ENCODE measurements at regions of chr2 and their contacts with region 1.

Region 1: GRCh38 chr2:9423100-9423921 is at the starts of genes CPSF3 and ITGB1BP1:
- DNase-seq: peak; percentile 97
- H3K4me3 ChIP-seq: peak within 1 kb of the TSS; percentile 70 to 92 (median 90)
- H3K27ac ChIP-seq: peak within 1 kb of the TSS; percentile 74
- H3K4me1 ChIP-seq: peaks cover 16% of the 10 kb centered on the region
- H3K27me3 ChIP-seq: no peaks in the 10 kb centered on the region
- CTCF ChIP-seq: no peak
- total RNA-seq, gene CPSF3: 38.8 to 40.7 TPM
- total RNA-seq, gene ITGB1BP1: 20.3 to 155 TPM

Region 2: GRCh38 chr2:9003616-9004337 is 419.5 kb before region 1 on chr2 and contains the start of gene MBOAT2:
- CTCF ChIA-PET with region 1: no interaction called
- dilution Hi-C with region 1: no loop called
- in situ Hi-C with region 1: no loop called
- intact Hi-C with region 1: loop called (anchors 10 kb)
- DNase-seq: peak; percentile 84
- H3K4me3 ChIP-seq: peak within 1 kb of the TSS; percentile 82 to 95 (median 85)
- H3K27ac ChIP-seq: peak within 1 kb of the TSS; percentile 74
- H3K4me1 ChIP-seq: peaks cover 40% of the 10 kb centered on the region
- H3K27me3 ChIP-seq: no peaks in the 10 kb centered on the region
- CTCF ChIP-seq: no peak
- total RNA-seq, gene MBOAT2: 14.8 to 103 TPM

Region 3: GRCh38 chr2:9378433-9379390 is 44.6 kb before region 1 on chr2:
- CTCF ChIA-PET with region 1: no interaction called
- dilution Hi-C with region 1: no loop called
- in situ Hi-C with region 1: no loop called
- intact Hi-C with region 1: no loop called
- DNase-seq: peak; percentile 19
- H3K4me3 ChIP-seq: no peak overlapping the region
- H3K27ac ChIP-seq: no peak overlapping the region
- H3K4me1 ChIP-seq: peaks cover 4% of the 10 kb centered on the region
- H3K27me3 ChIP-seq: no peaks in the 10 kb centered on the region
- CTCF ChIP-seq: no peak

Region 4: DNA sequence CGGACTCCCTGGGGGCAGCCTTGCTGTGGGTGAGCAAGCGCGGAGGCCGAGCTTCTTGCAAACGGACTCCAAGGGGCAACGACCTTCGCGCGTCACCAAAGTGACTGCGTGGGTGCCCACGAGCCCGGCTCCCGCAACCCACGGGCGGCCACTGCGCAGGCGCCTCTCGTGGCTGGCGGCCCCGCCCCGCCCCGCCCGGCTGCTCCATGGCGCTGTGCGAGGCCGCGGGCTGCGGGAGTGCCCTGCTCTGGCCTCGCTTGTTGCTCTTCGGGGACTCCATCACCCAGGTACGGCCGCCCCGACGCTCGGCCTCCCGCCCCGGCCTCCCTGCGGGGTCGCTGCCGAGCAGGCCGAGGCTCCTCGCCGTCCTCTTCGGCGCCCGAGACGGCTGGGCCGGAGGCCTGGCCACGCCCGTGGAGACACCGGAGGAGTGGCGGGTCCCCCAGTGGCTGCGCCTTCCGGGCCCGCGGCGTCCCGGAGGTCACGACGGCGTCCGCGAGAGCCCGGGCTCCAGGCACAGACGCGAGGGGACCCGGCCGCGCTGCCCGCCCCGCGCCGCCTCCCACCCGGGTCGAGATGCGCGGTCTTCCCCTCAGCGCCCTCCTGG is 51.2 kb after region 1 on chr2 and contains the start of gene IAH1:
- CTCF ChIA-PET with region 1: no interaction called
- dilution Hi-C with region 1: loop called (anchors 5 kb)
- in situ Hi-C with region 1: no loop called
- intact Hi-C with region 1: no loop called
- DNase-seq: peak; percentile 49
- H3K4me3 ChIP-seq: peak within 1 kb of the TSS; percentile 42 to 66 (median 65)
- H3K27ac ChIP-seq: peak within 1 kb of the TSS; percentile 54
- H3K4me1 ChIP-seq: peaks cover 11% of the 10 kb centered on the region
- H3K27me3 ChIP-seq: no peaks in the 10 kb centered on the region
- CTCF ChIP-seq: no peak
- total RNA-seq, gene IAH1: 26.3 to 53.1 TPM

Region 5: DNA sequence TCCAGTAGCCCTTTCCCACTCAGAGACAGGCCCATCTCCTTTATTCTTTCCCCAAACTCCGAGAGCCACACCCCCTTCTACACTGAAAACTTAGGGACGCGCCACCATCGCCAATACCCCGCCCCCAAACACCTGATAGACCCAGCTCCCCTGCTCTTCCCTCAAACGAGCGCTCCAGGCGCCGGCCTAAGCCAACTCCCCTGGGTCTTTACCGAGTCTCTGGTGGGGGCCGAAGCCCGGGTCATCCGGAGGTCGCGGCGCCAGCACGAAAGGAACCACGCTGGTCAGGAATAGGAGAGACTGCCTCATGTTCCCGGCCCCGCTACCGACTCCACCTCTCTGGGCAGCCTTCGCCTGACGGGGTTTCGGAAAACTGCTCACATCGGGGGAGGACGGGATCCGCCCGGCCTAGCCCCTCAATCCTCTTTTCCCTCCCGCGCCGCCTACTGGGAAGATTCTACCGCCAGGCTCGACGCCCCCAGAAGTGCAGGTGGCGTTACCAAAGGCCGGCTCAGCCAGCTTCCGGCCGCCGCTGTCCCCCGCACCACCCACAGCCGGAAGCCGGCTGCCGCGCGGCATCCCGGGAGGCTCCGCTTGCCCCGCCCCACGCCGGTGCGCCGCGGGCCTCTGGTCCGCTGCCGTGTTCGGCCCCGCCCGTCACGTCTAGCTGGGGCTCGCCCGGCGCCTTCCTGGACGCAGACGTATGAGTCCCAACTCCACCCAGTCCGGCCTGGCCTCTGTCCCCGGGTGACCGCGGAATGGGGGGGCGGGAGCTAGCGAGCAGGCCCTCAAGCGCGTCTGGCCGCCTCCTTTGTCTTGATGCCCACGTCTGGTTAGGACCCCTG is 132.2 kb after region 1 on chr2 and contains the start of gene ADAM17:
- CTCF ChIA-PET with region 1: no interaction called
- dilution Hi-C with region 1: no loop called
- in situ Hi-C with region 1: no loop called
- intact Hi-C with region 1: loop called (anchors 2 kb)
- DNase-seq: peak; percentile 98
- H3K4me3 ChIP-seq: peak within 1 kb of the TSS; percentile 60 to 98 (median 94)
- H3K27ac ChIP-seq: peak within 1 kb of the TSS; percentile 89
- H3K4me1 ChIP-seq: peaks cover 31% of the 10 kb centered on the region
- H3K27me3 ChIP-seq: no peaks in the 10 kb centered on the region
- CTCF ChIP-seq: peak; percentile 27 to 47
- total RNA-seq, gene ADAM17: 39.5 to 74.3 TPM

Region 6: GRCh38 chr2:10043906-10044601 is 620.7 kb after region 1 on chr2:
- CTCF ChIA-PET with region 1: interaction called, 28 read pairs
- dilution Hi-C with region 1: no loop called
- in situ Hi-C with region 1: no loop called
- intact Hi-C with region 1: no loop called
- DNase-seq: peak; percentile 88
- H3K4me3 ChIP-seq: peak overlapping the region; percentile 27 to 72 (median 67)
- H3K27ac ChIP-seq: peak overlapping the region; percentile 19
- H3K4me1 ChIP-seq: peaks cover 4% of the 10 kb centered on the region
- H3K27me3 ChIP-seq: no peaks in the 10 kb centered on the region
- CTCF ChIP-seq: no peak